ENCODE measurements at regions of chr2 and their contacts with region 1.

Region 1: GRCh38 chr2:17309741-17310339 is 208.4 kb downstream of the RAD51AP2 start:
- DNase-seq: peak; percentile 55
- H3K4me3 ChIP-seq: no peak overlapping the region
- H3K27ac ChIP-seq: no peak overlapping the region
- H3K4me1 ChIP-seq: no peaks in the 10 kb centered on the region
- H3K27me3 ChIP-seq: no peaks in the 10 kb centered on the region
- CTCF ChIP-seq: peak; percentile 70 to 91

Region 2: GRCh38 chr2:16773080-16773713 is 536.6 kb before region 1 on chr2:
- CTCF ChIA-PET with region 1: no interaction called
- dilution Hi-C with region 1: no loop called
- in situ Hi-C with region 1: loop called (anchors 10 kb)
- intact Hi-C with region 1: loop called (anchors 1 kb)
- DNase-seq: peak; percentile 55
- H3K4me3 ChIP-seq: no peak overlapping the region
- H3K27ac ChIP-seq: no peak overlapping the region
- H3K4me1 ChIP-seq: no peaks in the 10 kb centered on the region
- H3K27me3 ChIP-seq: peaks cover 3% of the 10 kb centered on the region
- CTCF ChIP-seq: peak; percentile 57 to 73

Region 3: DNA sequence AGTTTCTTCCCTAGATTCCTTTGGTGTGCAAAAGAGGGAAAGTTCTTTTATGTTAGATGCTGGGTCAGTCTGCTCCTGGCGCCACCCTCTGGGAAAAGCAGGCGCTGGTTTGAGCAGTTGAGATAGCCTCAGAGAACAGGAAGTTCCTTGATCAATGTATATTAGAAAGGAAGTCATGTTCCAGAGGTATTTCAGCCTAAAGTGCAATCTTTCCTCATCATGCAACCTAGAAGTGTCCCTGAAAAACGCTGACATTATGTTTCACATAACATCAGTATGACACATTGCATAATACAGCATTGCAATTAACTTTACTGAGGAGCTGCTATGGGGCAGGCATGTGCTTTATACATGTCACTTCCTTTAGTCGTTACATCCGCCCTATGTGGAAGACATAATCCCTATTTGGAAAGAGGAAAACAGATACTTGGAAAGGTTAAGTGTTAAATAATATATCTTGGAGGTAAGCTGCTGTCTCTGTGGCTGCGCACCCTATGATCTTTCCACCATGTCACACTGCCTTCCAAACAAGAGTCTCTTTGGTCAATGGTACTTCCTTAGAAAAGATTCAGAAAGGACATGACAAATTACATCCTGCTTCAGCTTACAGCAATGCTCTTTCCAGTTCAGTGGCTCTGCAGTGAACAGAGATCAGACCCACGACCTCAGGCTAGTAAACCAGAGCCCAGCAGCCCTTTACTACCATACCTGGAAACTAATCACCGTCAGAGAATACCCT is 161.3 kb before region 1 on chr2:
- CTCF ChIA-PET with region 1: no interaction called
- dilution Hi-C with region 1: no loop called
- in situ Hi-C with region 1: no loop called
- intact Hi-C with region 1: loop called (anchors 5 kb)
- DNase-seq: peak; percentile 15
- H3K4me3 ChIP-seq: no peak overlapping the region
- H3K27ac ChIP-seq: no peak overlapping the region
- H3K4me1 ChIP-seq: no peaks in the 10 kb centered on the region
- H3K27me3 ChIP-seq: no peaks in the 10 kb centered on the region
- CTCF ChIP-seq: peak; percentile 57 to 61

Region 4: DNA sequence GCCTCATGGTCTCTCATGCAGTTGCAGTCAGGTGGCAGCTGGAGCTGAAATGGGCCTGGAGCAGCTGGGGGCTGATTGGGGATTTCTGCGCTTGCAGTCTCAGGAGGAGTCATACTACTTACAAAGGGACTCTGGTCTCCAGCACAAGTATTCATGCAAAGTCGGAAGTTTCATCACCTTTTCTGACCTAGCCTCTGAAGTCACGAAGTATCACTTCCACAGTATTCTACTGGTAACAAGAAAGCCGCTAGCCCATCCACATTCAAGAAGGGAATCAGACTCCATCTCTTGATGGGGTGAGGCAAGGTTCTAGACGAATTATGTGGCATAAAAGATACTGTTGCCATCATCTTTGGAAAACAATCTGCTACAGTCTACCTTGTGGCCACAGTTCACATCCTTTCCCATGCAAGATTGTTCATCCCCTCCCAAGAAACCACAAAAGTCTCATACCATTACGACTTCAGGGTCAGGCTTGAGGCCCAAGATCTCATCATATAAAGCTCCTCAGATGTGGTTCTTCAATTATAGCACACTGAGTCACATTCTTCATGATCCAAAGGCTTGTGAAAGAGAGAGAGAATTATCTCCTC is 348.5 kb after region 1 on chr2:
- CTCF ChIA-PET with region 1: no interaction called
- dilution Hi-C with region 1: loop called (anchors 25 kb)
- in situ Hi-C with region 1: loop called in 1 of 2 experiments (anchors 25 kb)
- intact Hi-C with region 1: no loop called
- DNase-seq: peak; percentile 91
- H3K4me3 ChIP-seq: no peak overlapping the region
- H3K27ac ChIP-seq: no peak overlapping the region
- H3K4me1 ChIP-seq: peaks cover 5% of the 10 kb centered on the region
- H3K27me3 ChIP-seq: no peaks in the 10 kb centered on the region
- CTCF ChIP-seq: no peak

Measured in mammary epithelial cell (primary cell).